ENCODE measurements at regions of chr12 and their contacts with region 1.

Region 1: DNA sequence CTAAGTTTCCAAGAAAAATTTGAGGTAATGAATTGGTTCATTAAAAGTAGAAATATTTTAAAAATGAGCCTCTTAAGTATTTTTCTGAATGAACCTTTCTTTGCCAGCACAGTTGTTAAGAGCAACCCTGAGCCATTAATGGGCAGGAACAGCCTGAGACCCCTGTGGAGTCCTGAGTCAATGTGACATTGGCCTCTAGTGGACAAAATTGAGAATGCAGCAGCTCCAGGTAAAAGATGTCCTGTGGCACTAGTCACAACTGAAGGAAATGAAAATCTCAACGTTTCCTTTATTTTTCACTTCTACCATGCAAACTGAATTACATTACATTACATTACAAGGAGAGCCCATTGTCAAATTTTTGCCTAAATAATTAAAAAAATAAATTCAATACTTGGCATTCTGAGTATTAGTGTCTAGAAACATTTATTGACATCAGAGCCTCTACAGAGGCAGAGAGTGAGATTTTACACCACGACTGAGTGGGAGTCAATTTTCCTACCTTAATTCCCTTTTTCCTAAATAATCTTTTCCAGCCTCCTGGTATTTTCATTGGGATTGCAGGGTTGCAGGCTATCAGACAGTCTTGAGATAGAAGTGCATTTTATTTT is 135.7 kb downstream of the PPM1H start:
- DNase-seq: peak in 1 of 2 donors; percentile 41
- ATAC-seq: peak; percentile 69

Region 2: DNA sequence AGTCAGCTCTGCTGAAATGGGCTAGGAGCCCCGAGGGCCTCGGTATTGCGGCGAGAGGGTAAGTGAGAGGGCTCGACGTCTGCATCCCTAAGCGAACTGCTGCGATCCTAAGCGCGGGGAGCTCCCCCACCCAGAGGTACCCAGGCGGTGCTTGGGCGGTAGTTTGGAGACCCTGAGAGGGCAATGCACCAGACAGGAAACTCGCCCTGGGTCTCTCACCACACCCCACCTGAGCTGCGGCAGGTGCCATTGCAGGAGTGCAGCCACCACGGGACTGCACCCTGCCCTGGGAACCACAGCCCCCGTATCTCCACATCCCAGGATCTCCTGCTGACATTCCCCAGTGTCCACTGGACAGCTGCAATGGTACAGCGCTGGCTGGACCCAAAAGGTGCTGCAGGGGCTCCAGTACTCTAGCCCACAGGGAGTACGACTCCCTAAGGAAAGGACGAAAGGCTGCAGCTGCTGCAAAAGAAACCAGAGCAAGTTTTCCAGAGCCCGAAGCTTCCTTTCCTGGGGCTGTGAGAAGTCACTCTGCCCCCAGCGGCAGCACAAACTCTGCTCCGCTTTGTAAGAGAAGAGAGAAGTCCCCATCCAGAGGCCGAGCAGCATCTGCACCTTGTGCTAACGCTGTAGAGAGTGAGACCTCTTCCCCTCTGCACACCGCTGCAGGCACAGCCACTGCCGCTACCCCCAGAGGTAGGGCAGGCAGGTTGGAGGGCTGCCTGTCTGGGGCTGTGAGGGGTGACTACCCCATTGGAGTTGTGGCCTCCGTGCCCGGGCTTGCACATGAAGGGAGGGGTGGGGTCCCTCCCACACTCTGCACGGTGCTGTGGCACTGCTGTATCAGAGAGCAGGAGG is 363.7 kb before region 1 on chr12:
- intact Hi-C with region 1: loop called in 1 of 2 experiments (anchors 5 kb)
- DNase-seq: peak; percentile 30 to 62
- ATAC-seq: peak; percentile 84

Region 3: GRCh38 chr12:62581288-62582064 is 217.8 kb before region 1 on chr12:
- intact Hi-C with region 1: loop called (anchors 5 to 10 kb)
- DNase-seq: no peak
- ATAC-seq: peak; percentile 82

Measured in left colon (tissue), 2 donors.